K562 (cell line): ENCODE measurements at regions of chr18 and their contacts with region 1.

Region 1: GRCh38 chr18:21672521-21673267 is 31.9 kb downstream of the ABHD3 start:
- DNase-seq: no peak
- ATAC-seq: no peak
- H3K4me3 ChIP-seq: no peak overlapping the region
- H3K27ac ChIP-seq: no peak overlapping the region
- H3K4me1 ChIP-seq: peaks cover 0 to 4% of the 10 kb centered on the region in 2 experiments; a peak in 2 of 5 replicates
- H3K27me3 ChIP-seq: no peaks in the 10 kb centered on the region
- CTCF ChIP-seq: no peak
- EP300 ChIP-seq: no peak
- POLR2A ChIP-seq: no peak
- RAD21 ChIP-seq: no peak

Region 2: GRCh38 chr18:21686282-21687105 is 13.8 kb after region 1 on chr18:
- CTCF ChIA-PET with region 1: no interaction called
- POLR2A ChIA-PET with region 1: interaction called, 10 read pairs
- in situ Hi-C with region 1: no loop called
- intact Hi-C with region 1: no loop called
- DNase-seq: peak in 2 of 4 experiments; percentile 52 to 73
- ATAC-seq: peak; percentile 94
- H3K4me3 ChIP-seq: no peak overlapping the region
- H3K27ac ChIP-seq: peak overlapping the region; percentile 73
- H3K4me1 ChIP-seq: peaks cover 3 to 7% of the 10 kb centered on the region in 2 experiments; a peak in 4 of 5 replicates
- H3K27me3 ChIP-seq: no peaks in the 10 kb centered on the region
- CTCF ChIP-seq: no peak
- EP300 ChIP-seq: peak; percentile 72
- POLR2A ChIP-seq: no peak
- RAD21 ChIP-seq: 0 out of 4 replicates have a peak, but pooled peaks of 1 of the 2 experiments have one; percentile 14

Region 3: GRCh38 chr18:21740724-21741510 is 68.2 kb after region 1 on chr18 and contains the start of gene MIB1:
- CTCF ChIA-PET with region 1: no interaction called
- POLR2A ChIA-PET with region 1: no interaction called
- in situ Hi-C with region 1: no loop called
- intact Hi-C with region 1: no loop called
- DNase-seq: peak; percentile 63 to 74 (median 68)
- ATAC-seq: peak; percentile 72
- H3K4me3 ChIP-seq: peak within 1 kb of the TSS; percentile 90
- H3K27ac ChIP-seq: peak within 1 kb of the TSS; percentile 95
- H3K4me1 ChIP-seq: peaks cover 12 to 17% of the 10 kb centered on the region in 2 experiments; a peak in 4 of 5 replicates
- H3K27me3 ChIP-seq: no peaks in the 10 kb centered on the region
- CTCF ChIP-seq: no peak
- EP300 ChIP-seq: no peak
- POLR2A ChIP-seq: peak; percentile 87
- RAD21 ChIP-seq: no peak
- polyA plus RNA-seq, gene MIB1: 7.2 to 7.6 TPM